ENCODE measurements at regions of chr15 and their contacts with region 1.

Region 1: DNA sequence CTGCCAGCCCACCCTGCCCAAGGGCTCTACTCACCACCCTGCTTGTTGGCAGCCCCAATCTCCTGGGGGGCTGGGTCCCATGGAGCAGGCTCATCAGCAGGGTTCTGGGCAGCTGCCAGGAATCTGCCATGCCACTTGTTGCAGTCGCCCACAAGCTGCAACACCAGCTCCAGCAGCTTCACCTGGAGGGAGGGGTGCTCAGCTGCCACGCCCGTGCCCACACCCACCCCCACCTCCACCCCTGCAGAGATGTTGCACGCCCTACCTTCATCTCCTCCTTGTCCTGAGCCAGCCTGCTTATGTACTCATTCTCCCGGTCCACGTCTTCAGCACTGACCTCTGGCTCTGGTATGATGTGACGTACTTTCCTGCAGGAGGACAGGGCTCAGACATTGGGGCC is 77.9 kb upstream of the C2CD4B start:
- DNase-seq: no peak
- H3K4me3 Mint-ChIP-seq: no peak overlapping the region
- H3K27ac Mint-ChIP-seq: no peak overlapping the region
- H3K4me1 Mint-ChIP-seq: no peaks in the 10 kb centered on the region
- H3K27me3 Mint-ChIP-seq: peaks cover 3% of the 10 kb centered on the region

Region 2: GRCh38 chr15:62026487-62027262 is 216.3 kb before region 1 on chr15:
- CTCF ChIA-PET with region 1: no interaction called
- POLR2A ChIA-PET with region 1: no interaction called
- intact Hi-C with region 1: no loop called
- DNase-seq: no peak
- H3K4me3 Mint-ChIP-seq: no peak overlapping the region
- H3K27ac Mint-ChIP-seq: no peak overlapping the region
- H3K4me1 Mint-ChIP-seq: peaks cover 2% of the 10 kb centered on the region
- H3K27me3 Mint-ChIP-seq: no peaks in the 10 kb centered on the region

Region 3: GRCh38 chr15:62254137-62254934 is 11.3 kb after region 1 on chr15:
- CTCF ChIA-PET with region 1: interaction called, 10 read pairs
- POLR2A ChIA-PET with region 1: no interaction called
- intact Hi-C with region 1: no loop called
- DNase-seq: peak; percentile 79
- H3K4me3 Mint-ChIP-seq: no peak overlapping the region
- H3K27ac Mint-ChIP-seq: no peak overlapping the region
- H3K4me1 Mint-ChIP-seq: no peaks in the 10 kb centered on the region
- H3K27me3 Mint-ChIP-seq: peaks cover 7% of the 10 kb centered on the region

Region 4: DNA sequence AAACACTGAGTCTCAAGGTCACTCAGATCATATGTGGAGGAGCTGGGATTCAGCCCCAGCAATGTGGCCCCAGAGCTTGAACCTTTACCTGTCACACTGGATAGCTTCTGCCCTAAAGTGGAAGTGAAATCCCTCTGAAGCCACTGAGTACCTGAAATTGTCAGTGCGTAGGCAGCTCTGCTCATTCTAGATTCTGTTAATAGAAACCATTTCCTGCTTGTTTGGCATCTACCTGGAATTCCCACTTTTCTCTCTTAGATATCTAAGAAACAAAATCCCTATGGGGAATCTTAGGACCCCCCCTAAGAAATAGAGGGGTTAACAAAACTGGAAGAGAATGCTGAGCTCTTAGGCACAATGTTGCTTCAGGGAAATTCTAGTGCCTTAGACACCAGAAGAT is 1384.0 kb after region 1 on chr15:
- CTCF ChIA-PET with region 1: no interaction called
- POLR2A ChIA-PET with region 1: no interaction called
- intact Hi-C with region 1: no loop called
- DNase-seq: no peak
- H3K4me3 Mint-ChIP-seq: no peak overlapping the region
- H3K27ac Mint-ChIP-seq: peak overlapping the region; percentile 18
- H3K4me1 Mint-ChIP-seq: no peaks in the 10 kb centered on the region
- H3K27me3 Mint-ChIP-seq: no peaks in the 10 kb centered on the region